ENCODE measurements at regions of chr1 and their contacts with region 1.

Region 1: DNA sequence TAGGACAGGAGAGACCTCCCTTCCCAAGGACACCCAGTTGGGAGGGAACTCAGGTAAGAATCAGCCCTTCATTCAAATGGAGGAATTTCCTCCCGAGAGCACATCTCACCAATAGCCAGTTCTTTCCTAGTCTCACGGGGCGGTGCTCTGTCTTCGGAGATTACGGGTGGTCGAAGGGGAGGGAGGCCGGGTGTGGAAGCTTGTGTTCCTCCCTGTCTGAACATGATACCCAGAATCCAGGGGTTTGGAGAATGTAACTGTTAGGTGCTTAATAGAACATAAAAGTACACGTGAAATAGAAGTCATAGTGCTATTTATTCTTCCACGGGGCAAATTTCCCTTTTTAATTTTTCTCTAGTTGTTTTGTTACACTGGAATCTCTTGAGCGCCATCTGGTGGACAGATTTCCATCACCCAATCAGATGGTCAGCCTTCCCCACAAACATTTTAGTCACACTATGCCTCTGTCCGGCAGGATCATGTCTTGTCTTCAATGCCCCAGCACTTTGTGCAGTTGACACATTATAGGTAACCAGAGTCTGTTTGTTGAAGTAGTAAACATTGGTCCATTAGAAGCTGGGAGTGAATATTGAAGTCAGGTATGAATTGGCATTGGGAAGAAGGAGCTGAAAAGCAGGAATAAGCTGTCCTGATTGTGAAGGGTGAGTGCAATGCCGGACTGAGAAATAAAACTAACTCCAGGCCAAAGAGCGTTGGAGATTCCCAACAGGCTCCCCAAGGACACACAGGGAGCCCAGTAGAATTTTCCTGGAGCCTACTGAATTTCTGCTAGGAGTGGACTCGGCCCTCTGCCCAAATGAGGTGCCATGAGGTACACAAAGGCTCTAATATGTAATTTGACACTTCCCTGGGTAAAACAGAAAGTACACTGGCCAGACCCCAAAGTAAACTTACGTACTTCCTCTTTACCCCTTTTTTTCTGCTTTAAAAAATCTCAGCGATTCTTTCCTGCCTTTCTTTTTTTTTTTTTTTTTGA is 27.6 kb upstream of the ZNF697 start:
- DNase-seq: peak; percentile 85
- ATAC-seq: peak; percentile 95
- H3K4me3 ChIP-seq: peak overlapping the region; percentile 32 to 49
- H3K27ac ChIP-seq: peak overlapping the region; percentile 26; the same call in 1 of the 2 replicates
- H3K4me1 ChIP-seq: peaks cover 10 to 25% of the 10 kb centered on the region in 2 experiments
- H3K27me3 ChIP-seq: no peaks in the 10 kb centered on the region
- CTCF ChIP-seq: peak; percentile 75 to 87 (median 75)
- POLR2A ChIP-seq: no peak
- RAD21 ChIP-seq: peak; percentile 67

Region 2: GRCh38 chr1:119323216-119323982 is 352.2 kb before region 1 on chr1:
- CTCF ChIA-PET with region 1: no interaction called
- POLR2A ChIA-PET with region 1: no interaction called
- RAD21 ChIA-PET with region 1: no interaction called
- intact Hi-C with region 1: no loop called
- DNase-seq: no peak
- ATAC-seq: no peak
- H3K4me3 ChIP-seq: no peak overlapping the region
- H3K27ac ChIP-seq: no peak overlapping the region
- H3K4me1 ChIP-seq: no peaks in the 10 kb centered on the region
- H3K27me3 ChIP-seq: no peaks in the 10 kb centered on the region
- CTCF ChIP-seq: no peak
- POLR2A ChIP-seq: no peak
- RAD21 ChIP-seq: no peak

Region 3: DNA sequence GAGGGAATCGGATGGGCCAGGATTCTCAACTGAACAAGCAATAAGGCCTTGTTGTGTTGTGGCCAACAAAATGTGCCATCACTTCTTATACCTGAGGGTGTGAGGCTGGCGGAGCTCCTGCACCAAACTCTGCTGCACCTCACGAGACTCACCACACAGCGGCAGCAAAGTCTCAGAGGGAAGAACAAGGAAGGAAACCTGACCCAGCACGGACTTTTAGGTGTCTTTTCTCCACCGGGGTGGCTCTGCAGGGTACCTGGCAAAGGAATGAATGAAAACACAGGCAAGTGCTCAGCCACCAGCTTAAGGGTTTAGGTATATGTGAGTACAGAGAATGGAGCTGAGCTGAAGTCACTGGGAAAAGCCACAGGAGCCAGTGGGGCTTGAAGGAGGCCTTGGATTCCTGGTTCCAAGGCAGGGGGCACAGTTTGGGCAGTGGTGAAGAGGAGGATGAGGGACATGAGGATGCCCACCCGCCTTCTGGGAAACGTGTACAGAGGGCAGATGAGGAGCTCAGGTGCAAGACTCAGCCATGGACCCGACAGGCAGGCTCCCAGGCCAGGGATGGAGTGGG is 199.7 kb before region 1 on chr1:
- CTCF ChIA-PET with region 1: interaction called, 7 read pairs
- POLR2A ChIA-PET with region 1: no interaction called
- RAD21 ChIA-PET with region 1: no interaction called
- intact Hi-C with region 1: loop called (anchors 10 kb)
- DNase-seq: peak; percentile 33
- ATAC-seq: peak; percentile 99
- H3K4me3 ChIP-seq: no peak overlapping the region
- H3K27ac ChIP-seq: no peak overlapping the region
- H3K4me1 ChIP-seq: peaks cover 0 to 4% of the 10 kb centered on the region in 2 experiments; a peak in 2 of 4 replicates
- H3K27me3 ChIP-seq: 0 out of 2 replicates have a peak, but pooled peaks cover 4% of the 10 kb centered on the region
- CTCF ChIP-seq: peak; percentile 59 to 90 (median 75); a peak in 5 of 6 replicates
- POLR2A ChIP-seq: no peak
- RAD21 ChIP-seq: peak; percentile 76

Region 4: DNA sequence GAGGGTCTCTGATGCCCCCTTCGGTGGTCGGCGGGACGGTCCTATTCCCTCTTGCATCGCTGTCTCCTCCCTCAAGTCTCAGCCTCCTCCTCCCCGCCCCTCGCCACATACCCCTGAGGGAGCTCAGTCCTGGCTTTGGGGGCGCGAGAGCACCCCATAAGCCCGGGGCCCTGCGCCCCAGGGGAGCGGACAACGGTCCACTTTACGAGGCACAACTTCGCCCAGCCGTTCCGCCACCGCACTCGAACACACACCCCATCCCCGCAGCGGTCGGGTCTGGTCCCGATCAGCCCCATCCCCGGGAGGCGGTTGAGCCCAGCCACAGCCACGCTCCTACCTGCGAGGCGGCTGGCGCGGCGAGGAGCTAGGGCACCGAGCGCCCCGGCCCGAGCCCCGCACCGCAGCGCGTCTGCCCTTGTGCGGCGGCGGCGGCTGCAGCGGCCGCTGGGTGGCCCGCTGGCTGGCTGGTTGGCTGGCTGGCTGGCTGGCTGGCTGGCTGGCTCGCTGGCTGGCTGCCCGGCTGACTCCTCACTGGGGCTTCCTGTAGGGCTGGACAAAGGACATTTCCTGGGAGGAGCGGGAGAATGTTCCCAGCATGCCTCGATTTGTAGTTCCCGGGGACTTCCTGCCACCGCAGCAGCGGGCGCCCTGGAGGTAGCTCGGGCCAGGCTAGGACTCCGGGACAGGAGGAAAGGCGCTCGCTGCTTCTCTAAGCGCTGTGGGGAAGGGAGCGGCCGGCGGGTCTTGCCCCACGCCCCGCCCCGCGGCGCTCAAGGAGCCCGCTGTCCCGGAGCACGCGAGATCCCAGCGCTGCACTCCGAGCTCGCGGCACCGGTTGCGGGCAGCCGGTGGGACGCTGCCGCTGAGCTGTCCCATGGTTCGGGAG is 27.7 kb before region 1 on chr1 and contains the start of gene ZNF697:
- CTCF ChIA-PET with region 1: interaction called, 19 read pairs
- POLR2A ChIA-PET with region 1: interaction called, 4 read pairs
- RAD21 ChIA-PET with region 1: no interaction called
- intact Hi-C with region 1: loop called (anchors 1 kb)
- DNase-seq: peak; percentile 89
- ATAC-seq: peak; percentile 96
- H3K4me3 ChIP-seq: peak within 1 kb of the TSS; percentile 83 to 93
- H3K27ac ChIP-seq: peak within 1 kb of the TSS; percentile 63
- H3K4me1 ChIP-seq: peaks cover 11 to 29% of the 10 kb centered on the region in 2 experiments; a peak in 3 of 4 replicates
- H3K27me3 ChIP-seq: peaks cover 29% of the 10 kb centered on the region
- CTCF ChIP-seq: peak in 1 of 3 experiments; percentile 6; a peak in 1 of 6 replicates
- POLR2A ChIP-seq: peak; percentile 31
- RAD21 ChIP-seq: no peak
- total RNA-seq, gene ZNF697: 5.9 TPM

Region 5: DNA sequence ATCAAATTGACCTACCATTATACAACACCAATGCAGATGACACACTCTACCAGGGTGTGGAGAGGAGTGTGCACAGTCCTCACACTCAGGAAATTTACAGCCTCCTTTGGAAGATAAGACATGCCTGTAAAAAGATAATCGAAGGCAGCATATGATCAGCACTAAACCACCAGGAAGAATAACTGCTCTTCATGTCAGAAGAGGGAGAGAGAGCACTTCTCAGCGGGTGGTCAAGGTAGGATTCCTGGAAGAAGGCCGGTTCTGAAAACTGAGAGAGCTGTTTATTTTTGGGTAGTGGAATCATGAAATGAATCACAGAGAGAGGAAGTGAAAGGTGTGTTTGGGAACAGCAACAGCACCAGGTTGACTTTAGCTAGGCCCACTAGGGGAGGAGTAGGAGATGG is 13.6 kb before region 1 on chr1:
- CTCF ChIA-PET with region 1: interaction called, 69 read pairs
- POLR2A ChIA-PET with region 1: interaction called, 3 read pairs
- RAD21 ChIA-PET with region 1: no interaction called
- intact Hi-C with region 1: no loop called
- DNase-seq: no peak
- ATAC-seq: no peak
- H3K4me3 ChIP-seq: no peak overlapping the region
- H3K27ac ChIP-seq: no peak overlapping the region
- H3K4me1 ChIP-seq: peaks cover 0 to 5% of the 10 kb centered on the region in 2 experiments; a peak in 1 of 4 replicates
- H3K27me3 ChIP-seq: peaks cover 2% of the 10 kb centered on the region; the same call in 1 of the 2 replicates
- CTCF ChIP-seq: 0 out of 6 replicates have a peak, but pooled peaks of 1 of the 3 experiments have one; percentile 3
- POLR2A ChIP-seq: no peak
- RAD21 ChIP-seq: no peak

Region 6: GRCh38 chr1:119773711-119774241 is 98.1 kb after region 1 on chr1:
- CTCF ChIA-PET with region 1: no interaction called
- POLR2A ChIA-PET with region 1: no interaction called
- RAD21 ChIA-PET with region 1: no interaction called
- intact Hi-C with region 1: no loop called
- DNase-seq: no peak
- ATAC-seq: no peak
- H3K4me3 ChIP-seq: no peak overlapping the region
- H3K27ac ChIP-seq: no peak overlapping the region
- H3K4me1 ChIP-seq: peaks cover 2 to 7% of the 10 kb centered on the region in 2 experiments; a peak in 2 of 4 replicates
- H3K27me3 ChIP-seq: no peaks in the 10 kb centered on the region
- CTCF ChIP-seq: no peak
- POLR2A ChIP-seq: no peak
- RAD21 ChIP-seq: no peak

Measured in HCT116 (cell line).